Astrocyte of the cerebellum (primary cell): ENCODE measurements at regions of chr14 and their contacts with region 1.

Region 1: GRCh38 chr14:64986578-64987571 is at the start of gene FNTB:
- DNase-seq: peak; percentile 95
- H3K4me3 ChIP-seq: peak within 1 kb of the TSS; percentile 98
- CTCF ChIP-seq: peak; percentile 83

Region 2: DNA sequence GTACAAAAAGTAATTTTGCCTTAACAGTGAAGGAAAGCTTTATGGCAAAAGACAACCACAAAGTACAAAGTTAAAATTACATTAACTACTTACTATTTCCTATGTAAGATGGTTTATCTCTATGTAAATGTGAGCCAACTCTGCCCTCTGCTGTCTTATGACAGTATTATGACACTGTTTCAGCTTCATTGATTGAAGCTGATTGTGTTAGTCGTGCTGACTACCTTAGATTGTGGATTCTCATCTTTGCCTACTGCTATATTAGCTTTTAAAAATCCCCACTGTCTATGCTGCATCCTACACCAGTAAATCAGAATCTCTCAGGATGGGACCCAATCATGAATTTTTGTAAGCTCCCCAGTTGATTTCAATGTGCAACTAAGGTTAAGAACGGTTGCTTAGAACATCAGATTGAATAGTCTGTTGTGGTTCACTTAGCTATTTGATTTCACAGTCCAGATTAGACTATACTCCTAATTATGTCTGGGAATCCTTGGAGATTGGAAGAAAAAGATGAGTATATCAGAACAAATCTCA is 95.0 kb before region 1 on chr14:
- in situ Hi-C with region 1: no loop called
- DNase-seq: peak; percentile 52
- H3K4me3 ChIP-seq: no peak overlapping the region
- CTCF ChIP-seq: peak; percentile 42

Region 3: GRCh38 chr14:64919622-64920021 is 67.3 kb before region 1 on chr14:
- in situ Hi-C with region 1: loop called (anchors 5 kb)
- DNase-seq: no peak
- H3K4me3 ChIP-seq: no peak overlapping the region
- CTCF ChIP-seq: no peak

Region 4: DNA sequence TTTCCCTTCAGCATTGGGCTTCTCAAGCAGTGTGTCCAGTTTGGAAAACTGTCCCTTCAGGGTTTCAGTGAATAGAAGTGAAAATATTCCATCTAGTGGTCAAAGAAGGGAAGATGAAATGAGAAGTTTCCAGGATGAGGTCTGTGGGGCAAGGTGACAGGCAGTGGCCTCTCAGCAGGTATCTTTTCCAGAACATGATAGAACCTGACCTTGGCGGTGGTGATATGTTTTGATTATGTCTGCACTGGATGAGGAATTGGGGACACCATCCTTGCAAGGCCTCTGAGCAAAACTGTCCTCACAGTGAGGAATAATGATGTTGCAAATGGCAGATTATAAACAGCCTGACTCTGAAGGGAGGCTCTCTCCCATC is 49.1 kb before region 1 on chr14:
- in situ Hi-C with region 1: no loop called
- DNase-seq: no peak
- H3K4me3 ChIP-seq: no peak overlapping the region
- CTCF ChIP-seq: peak; percentile 44

Region 5: GRCh38 chr14:65019944-65020566 is 33.2 kb after region 1 on chr14:
- in situ Hi-C with region 1: no loop called
- DNase-seq: peak; percentile 79
- H3K4me3 ChIP-seq: no peak overlapping the region
- CTCF ChIP-seq: peak; percentile 83

Region 6: DNA sequence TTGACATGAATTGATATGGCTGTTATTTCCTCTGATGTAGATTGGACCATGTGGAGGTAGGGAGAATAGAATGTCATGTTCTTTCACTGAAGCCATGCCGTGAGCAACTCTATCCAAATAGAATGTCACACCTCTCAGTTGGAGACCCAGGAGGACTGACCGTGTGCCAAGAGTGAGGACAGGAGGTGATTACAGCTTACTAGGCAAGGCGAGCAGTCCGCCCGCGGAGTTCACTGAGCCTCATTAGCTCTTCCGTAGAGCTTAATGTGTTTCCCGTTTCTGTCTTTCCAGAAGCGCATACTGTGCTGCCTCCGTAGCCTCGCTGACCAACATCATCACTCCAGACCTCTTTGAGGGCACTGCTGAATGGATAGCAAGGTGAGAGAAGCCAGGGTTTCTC is 45.4 kb after region 1 on chr14:
- in situ Hi-C with region 1: loop called (anchors 5 kb)
- DNase-seq: no peak
- H3K4me3 ChIP-seq: no peak overlapping the region
- CTCF ChIP-seq: no peak